Activated CD8-positive, alpha-beta T cell treated with anti-CD3 and anti-CD28 coated beads for 36 hours (primary cell): ENCODE measurements at regions of chr14 and their contacts with region 1.

Region 1: DNA sequence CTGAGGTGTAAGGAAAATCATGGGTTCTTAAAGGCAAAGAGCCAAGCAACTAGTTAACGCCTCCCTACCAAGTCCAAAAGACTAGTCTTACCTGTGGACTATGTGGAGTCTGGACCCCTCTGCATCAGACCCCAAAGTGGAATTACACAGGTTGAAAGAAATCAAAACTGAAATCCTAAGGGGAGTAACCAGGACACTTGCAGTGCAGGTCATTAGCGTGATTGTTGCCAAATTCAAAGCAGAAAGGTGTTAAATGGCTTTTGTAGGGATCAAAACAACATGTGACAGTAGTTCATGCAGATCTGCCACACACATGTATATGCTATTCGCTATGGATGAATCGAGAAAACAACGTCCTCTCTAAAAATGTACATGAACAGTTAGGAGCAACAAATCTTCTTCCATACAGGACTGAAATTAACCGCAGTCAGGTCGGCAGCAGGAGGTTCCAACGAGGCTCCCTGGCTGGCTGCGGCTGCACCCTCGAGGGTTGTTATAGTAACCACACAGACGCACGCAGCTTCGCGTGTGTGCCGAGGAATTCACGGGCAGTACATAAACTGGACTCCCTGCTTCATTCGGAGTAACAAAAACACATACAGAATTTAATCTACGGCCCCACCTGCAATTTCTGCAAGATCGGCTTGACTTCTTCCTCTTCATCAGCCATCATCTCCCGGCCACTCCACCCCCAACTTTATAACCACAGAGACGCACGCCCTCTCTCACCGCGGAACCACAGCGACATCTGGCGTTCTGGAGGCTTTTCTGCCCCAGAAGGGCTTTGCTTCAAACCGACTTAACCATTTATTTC is at the start of gene TTC5:
- DNase-seq: peak; percentile 89
- ATAC-seq: peak; percentile 98
- H3K4me3 Mint-ChIP-seq: peak within 1 kb of the TSS; percentile 97
- H3K27ac Mint-ChIP-seq: peak within 1 kb of the TSS; percentile 87
- H3K4me1 Mint-ChIP-seq: peaks cover 23% of the 10 kb centered on the region
- H3K27me3 Mint-ChIP-seq: no peaks in the 10 kb centered on the region
- CTCF ChIP-seq: peak; percentile 78
- total RNA-seq, gene TTC5: 20.6 to 20.8 TPM

Region 2: DNA sequence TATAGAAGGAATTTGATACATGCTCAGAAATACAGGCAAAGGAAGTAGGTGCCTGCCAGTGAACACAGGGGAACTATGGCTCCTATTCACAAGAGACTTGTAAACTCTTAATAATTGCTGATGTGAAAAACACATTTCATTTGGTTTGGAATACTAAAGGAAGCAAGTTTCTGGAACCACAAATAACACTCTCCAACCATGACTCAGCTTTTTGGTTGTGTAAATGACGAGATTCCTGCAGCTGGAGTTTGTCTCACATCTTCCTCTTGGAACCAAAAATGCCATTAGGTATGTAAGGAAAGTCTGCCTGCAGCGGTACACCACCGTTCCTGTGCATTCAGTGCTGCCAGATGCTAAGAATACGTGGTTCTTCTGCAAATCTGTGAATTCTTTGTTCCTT is 86.4 kb before region 1 on chr14:
- CTCF ChIA-PET with region 1: no interaction called
- POLR2A ChIA-PET with region 1: no interaction called
- intact Hi-C with region 1: no loop called
- DNase-seq: no peak
- ATAC-seq: no peak
- H3K4me3 Mint-ChIP-seq: no peak overlapping the region
- H3K27ac Mint-ChIP-seq: no peak overlapping the region
- H3K4me1 Mint-ChIP-seq: no peaks in the 10 kb centered on the region
- H3K27me3 Mint-ChIP-seq: peaks cover 4% of the 10 kb centered on the region
- CTCF ChIP-seq: no peak

Region 3: GRCh38 chr14:20278414-20278813 is 27.1 kb before region 1 on chr14:
- CTCF ChIA-PET with region 1: no interaction called
- POLR2A ChIA-PET with region 1: no interaction called
- intact Hi-C with region 1: no loop called
- DNase-seq: peak; percentile 9
- ATAC-seq: no peak
- H3K4me3 Mint-ChIP-seq: no peak overlapping the region
- H3K27ac Mint-ChIP-seq: no peak overlapping the region
- H3K4me1 Mint-ChIP-seq: peaks cover 20% of the 10 kb centered on the region
- H3K27me3 Mint-ChIP-seq: no peaks in the 10 kb centered on the region
- CTCF ChIP-seq: no peak

Region 4: GRCh38 chr14:20327005-20327869 is 21.8 kb after region 1 on chr14:
- CTCF ChIA-PET with region 1: interaction called, 10 read pairs
- POLR2A ChIA-PET with region 1: no interaction called
- intact Hi-C with region 1: no loop called
- DNase-seq: peak; percentile 13
- ATAC-seq: peak; percentile 53
- H3K4me3 Mint-ChIP-seq: peak overlapping the region; percentile 0
- H3K27ac Mint-ChIP-seq: peak overlapping the region; percentile 41
- H3K4me1 Mint-ChIP-seq: peaks cover 36% of the 10 kb centered on the region
- H3K27me3 Mint-ChIP-seq: no peaks in the 10 kb centered on the region
- CTCF ChIP-seq: peak; percentile 87

Region 5: GRCh38 chr14:20350860-20351259 is 45.4 kb after region 1 on chr14:
- CTCF ChIA-PET with region 1: no interaction called
- POLR2A ChIA-PET with region 1: no interaction called
- intact Hi-C with region 1: no loop called
- DNase-seq: no peak
- ATAC-seq: no peak
- H3K4me3 Mint-ChIP-seq: no peak overlapping the region
- H3K27ac Mint-ChIP-seq: no peak overlapping the region
- H3K4me1 Mint-ChIP-seq: no peaks in the 10 kb centered on the region
- H3K27me3 Mint-ChIP-seq: no peaks in the 10 kb centered on the region
- CTCF ChIP-seq: no peak